CD8-positive, alpha-beta memory T cell (primary cell): ENCODE measurements at regions of chr21 and their contacts with region 1.

Region 1: GRCh38 chr21:36319765-36320420 is at the start of gene MORC3:
- DNase-seq: peak; percentile 96 to 99 (median 98)
- H3K4me3 ChIP-seq: peak within 1 kb of the TSS; percentile 74
- H3K4me3 Mint-ChIP-seq: peak within 1 kb of the TSS; percentile 86 to 96 (median 93)
- H3K27ac ChIP-seq: peak within 1 kb of the TSS; percentile 81
- H3K27ac Mint-ChIP-seq: peak within 1 kb of the TSS; percentile 89 to 98 (median 96)
- H3K4me1 ChIP-seq: peaks cover 10% of the 10 kb centered on the region
- H3K4me1 Mint-ChIP-seq: peaks cover 24 to 39% (median 39%) of the 10 kb centered on the region in 3 donors
- H3K27me3 ChIP-seq: no peaks in the 10 kb centered on the region
- H3K27me3 Mint-ChIP-seq: peaks cover 0 to 3% of the 10 kb centered on the region in 2 donors
- total RNA-seq, gene MORC3: 19.6 to 23.0 TPM

Region 2: DNA sequence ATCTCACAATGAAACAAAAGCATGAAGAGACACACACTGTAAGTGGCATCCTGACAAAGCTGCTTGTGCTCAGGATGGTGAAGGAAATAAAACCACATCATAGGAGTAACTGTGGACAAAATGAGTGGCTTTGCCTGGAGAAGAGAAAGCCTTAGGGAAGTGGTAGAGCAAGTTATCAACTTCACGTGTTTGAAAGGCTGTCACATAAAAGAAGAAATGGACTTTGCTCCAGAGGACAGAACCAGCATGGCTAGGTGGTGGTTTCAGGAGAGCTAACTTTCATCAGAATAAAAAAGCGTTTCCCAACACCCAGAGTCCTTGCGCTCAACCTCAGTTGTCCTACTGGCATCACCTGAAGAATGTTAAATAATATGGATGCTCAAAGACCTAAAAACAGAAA is 399.5 kb before region 1 on chr21:
- CTCF ChIA-PET with region 1: no interaction called
- POLR2A ChIA-PET with region 1: no interaction called
- DNase-seq: no peak
- H3K4me3 ChIP-seq: no peak overlapping the region
- H3K4me3 Mint-ChIP-seq: no peak overlapping the region
- H3K27ac ChIP-seq: no peak overlapping the region
- H3K27ac Mint-ChIP-seq: no peak overlapping the region
- H3K4me1 ChIP-seq: no peaks in the 10 kb centered on the region
- H3K4me1 Mint-ChIP-seq: no peaks in the 10 kb centered on the region
- H3K27me3 ChIP-seq: no peaks in the 10 kb centered on the region
- H3K27me3 Mint-ChIP-seq: peaks cover 3 to 52% of the 10 kb centered on the region in 2 donors

Region 3: DNA sequence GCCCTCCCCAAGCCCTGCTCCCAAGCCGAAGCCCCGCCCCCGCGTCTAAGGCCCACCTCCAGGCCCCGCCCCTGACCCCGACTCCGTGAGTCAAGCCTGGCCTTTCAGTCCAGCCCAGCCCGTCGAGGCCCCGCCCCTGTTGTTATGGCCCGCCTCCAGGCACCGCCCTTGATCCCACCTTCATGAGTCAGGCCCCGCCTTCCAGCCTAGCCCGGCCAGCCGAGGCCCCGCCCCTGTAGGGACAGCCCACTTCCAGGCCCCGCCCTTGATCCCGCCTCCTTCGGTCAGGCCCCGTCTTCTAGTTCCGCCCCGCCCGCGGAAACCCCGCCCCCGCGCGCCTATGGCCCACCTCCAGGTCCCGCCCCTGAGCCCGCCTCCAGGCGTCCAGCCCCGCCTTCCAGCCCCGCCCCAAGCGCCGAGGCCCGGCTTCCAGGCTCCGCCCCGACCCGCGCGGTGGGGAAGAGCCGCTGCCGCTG is 163.5 kb before region 1 on chr21:
- CTCF ChIA-PET with region 1: interaction called, 9 read pairs
- POLR2A ChIA-PET with region 1: interaction called, 11 read pairs
- DNase-seq: peak; percentile 99 to 100 (median 100)
- H3K4me3 ChIP-seq: peak overlapping the region; percentile 78
- H3K4me3 Mint-ChIP-seq: peak overlapping the region; percentile 78 to 92 (median 85)
- H3K27ac ChIP-seq: peak overlapping the region; percentile 61
- H3K27ac Mint-ChIP-seq: peak overlapping the region in 6 of 8 donors; percentile 17 to 80 (median 64)
- H3K4me1 ChIP-seq: peaks cover 20% of the 10 kb centered on the region
- H3K4me1 Mint-ChIP-seq: peaks cover 23 to 39% (median 37%) of the 10 kb centered on the region in 3 donors
- H3K27me3 ChIP-seq: no peaks in the 10 kb centered on the region
- H3K27me3 Mint-ChIP-seq: no peaks in the 10 kb centered on the region

Region 4: GRCh38 chr21:36174780-36175179 is 145.1 kb before region 1 on chr21:
- CTCF ChIA-PET with region 1: interaction called, 8 read pairs
- POLR2A ChIA-PET with region 1: interaction called, 24 read pairs
- DNase-seq: no peak
- H3K4me3 ChIP-seq: no peak overlapping the region
- H3K4me3 Mint-ChIP-seq: no peak overlapping the region
- H3K27ac ChIP-seq: no peak overlapping the region
- H3K27ac Mint-ChIP-seq: peak overlapping the region in 4 of 8 donors; percentile 27 to 73 (median 53)
- H3K4me1 ChIP-seq: peaks cover 15% of the 10 kb centered on the region
- H3K4me1 Mint-ChIP-seq: peaks cover 11 to 20% (median 14%) of the 10 kb centered on the region in 3 donors
- H3K27me3 ChIP-seq: no peaks in the 10 kb centered on the region
- H3K27me3 Mint-ChIP-seq: no peaks in the 10 kb centered on the region

Region 5: GRCh38 chr21:36260030-36260787 is 59.7 kb before region 1 on chr21:
- CTCF ChIA-PET with region 1: interaction called, 29 read pairs
- POLR2A ChIA-PET with region 1: interaction called, 8 read pairs
- DNase-seq: peak; percentile 7 to 65 (median 51)
- H3K4me3 ChIP-seq: peak overlapping the region; percentile 49
- H3K4me3 Mint-ChIP-seq: peak overlapping the region; percentile 84 to 90 (median 87)
- H3K27ac ChIP-seq: peak overlapping the region; percentile 32
- H3K27ac Mint-ChIP-seq: peak overlapping the region; percentile 82 to 96 (median 93)
- H3K4me1 ChIP-seq: peaks cover 9% of the 10 kb centered on the region
- H3K4me1 Mint-ChIP-seq: peaks cover 14 to 15% (median 14%) of the 10 kb centered on the region in 3 donors
- H3K27me3 ChIP-seq: no peaks in the 10 kb centered on the region
- H3K27me3 Mint-ChIP-seq: no peaks in the 10 kb centered on the region

Region 6: GRCh38 chr21:36288651-36289243 is 31.1 kb before region 1 on chr21:
- CTCF ChIA-PET with region 1: interaction called, 30 read pairs
- POLR2A ChIA-PET with region 1: interaction called, 65 read pairs
- DNase-seq: peak in 2 of 5 donors; percentile 24 to 29
- H3K4me3 ChIP-seq: peak overlapping the region; percentile 32
- H3K4me3 Mint-ChIP-seq: peak overlapping the region; percentile 54 to 81 (median 73)
- H3K27ac ChIP-seq: no peak overlapping the region
- H3K27ac Mint-ChIP-seq: peak overlapping the region; percentile 80 to 94 (median 88)
- H3K4me1 ChIP-seq: peaks cover 18% of the 10 kb centered on the region
- H3K4me1 Mint-ChIP-seq: peaks cover 15 to 27% (median 24%) of the 10 kb centered on the region in 3 donors
- H3K27me3 ChIP-seq: no peaks in the 10 kb centered on the region
- H3K27me3 Mint-ChIP-seq: no peaks in the 10 kb centered on the region

Region 7: GRCh38 chr21:36297921-36298594 is 21.8 kb before region 1 on chr21:
- CTCF ChIA-PET with region 1: interaction called, 25 read pairs
- POLR2A ChIA-PET with region 1: interaction called, 66 read pairs
- DNase-seq: peak; percentile 49 to 85 (median 80)
- H3K4me3 ChIP-seq: peak overlapping the region; percentile 69
- H3K4me3 Mint-ChIP-seq: peak overlapping the region; percentile 42 to 90 (median 87)
- H3K27ac ChIP-seq: peak overlapping the region; percentile 75
- H3K27ac Mint-ChIP-seq: peak overlapping the region; percentile 89 to 100 (median 98)
- H3K4me1 ChIP-seq: peaks cover 33% of the 10 kb centered on the region
- H3K4me1 Mint-ChIP-seq: peaks cover 26 to 36% (median 27%) of the 10 kb centered on the region in 3 donors
- H3K27me3 ChIP-seq: no peaks in the 10 kb centered on the region
- H3K27me3 Mint-ChIP-seq: no peaks in the 10 kb centered on the region

Region 8: GRCh38 chr21:36668713-36669112 is 348.8 kb after region 1 on chr21:
- CTCF ChIA-PET with region 1: no interaction called
- POLR2A ChIA-PET with region 1: no interaction called
- DNase-seq: no peak
- H3K4me3 ChIP-seq: no peak overlapping the region
- H3K4me3 Mint-ChIP-seq: no peak overlapping the region
- H3K27ac ChIP-seq: no peak overlapping the region
- H3K27ac Mint-ChIP-seq: no peak overlapping the region
- H3K4me1 ChIP-seq: no peaks in the 10 kb centered on the region
- H3K4me1 Mint-ChIP-seq: no peaks in the 10 kb centered on the region
- H3K27me3 ChIP-seq: no peaks in the 10 kb centered on the region
- H3K27me3 Mint-ChIP-seq: peaks cover 19 to 31% of the 10 kb centered on the region in 2 donors